Activated CD4-positive, alpha-beta T cell treated with anti-CD3 and anti-CD28 coated beads, Interleukin-2, amount 10 ng/mL, durations not matched to agents 7 days and 5 days (primary cell): ENCODE measurements at regions of chr3 and their contacts with region 1.

Region 1: DNA sequence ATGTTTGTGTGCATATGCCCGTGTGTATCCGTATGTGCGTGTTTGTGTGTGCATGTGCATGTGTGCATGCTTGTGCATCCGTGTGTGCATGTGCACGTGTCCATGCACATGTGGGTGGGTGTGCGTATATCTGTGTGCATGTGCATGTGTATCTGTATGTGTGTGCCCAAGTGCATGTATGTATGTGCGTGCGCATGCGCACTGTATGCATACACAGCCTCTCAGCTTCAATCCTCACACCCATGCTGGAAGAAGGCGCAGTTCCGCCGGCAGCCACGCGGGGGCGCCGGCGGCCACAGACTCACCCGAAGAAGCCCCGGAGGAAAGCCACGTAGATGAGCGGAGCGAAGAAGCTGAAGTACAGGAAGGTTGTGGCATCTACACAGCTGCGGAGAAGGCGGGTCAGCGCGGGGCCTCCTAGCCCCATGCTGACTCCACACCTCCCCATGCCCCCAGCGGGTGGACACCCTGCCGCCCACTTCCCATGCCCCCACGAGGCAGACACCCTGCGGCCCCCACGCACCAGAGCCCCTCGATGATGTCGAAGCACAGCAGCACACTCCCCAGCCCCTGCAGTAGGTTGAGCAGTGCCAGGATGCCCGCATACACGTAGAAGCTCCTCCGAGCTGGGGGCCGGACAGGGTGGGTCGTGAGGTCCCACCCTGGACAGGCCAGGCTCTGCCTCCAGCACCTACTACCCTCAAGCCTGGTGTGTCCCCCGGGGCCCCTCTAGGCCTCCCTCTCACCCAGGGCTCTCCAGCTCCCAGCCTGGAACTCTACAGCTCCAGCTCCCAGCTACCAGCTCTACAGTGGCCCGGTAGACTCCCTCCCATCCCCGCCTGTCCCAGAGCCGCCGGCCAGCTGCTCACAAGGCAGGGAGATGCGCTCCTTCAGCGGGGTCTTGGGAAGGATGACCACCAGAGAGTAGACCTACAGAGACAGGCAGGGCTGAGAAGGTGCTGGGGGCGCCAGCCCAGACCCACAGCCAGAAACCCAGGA is 15.4 kb downstream of the TPRA1 start:
- DNase-seq: peak; percentile 88
- H3K4me3 Mint-ChIP-seq: no peak overlapping the region
- H3K27ac Mint-ChIP-seq: no peak overlapping the region
- H3K4me1 Mint-ChIP-seq: peaks cover 7% of the 10 kb centered on the region
- H3K27me3 Mint-ChIP-seq: no peaks in the 10 kb centered on the region

Region 2: DNA sequence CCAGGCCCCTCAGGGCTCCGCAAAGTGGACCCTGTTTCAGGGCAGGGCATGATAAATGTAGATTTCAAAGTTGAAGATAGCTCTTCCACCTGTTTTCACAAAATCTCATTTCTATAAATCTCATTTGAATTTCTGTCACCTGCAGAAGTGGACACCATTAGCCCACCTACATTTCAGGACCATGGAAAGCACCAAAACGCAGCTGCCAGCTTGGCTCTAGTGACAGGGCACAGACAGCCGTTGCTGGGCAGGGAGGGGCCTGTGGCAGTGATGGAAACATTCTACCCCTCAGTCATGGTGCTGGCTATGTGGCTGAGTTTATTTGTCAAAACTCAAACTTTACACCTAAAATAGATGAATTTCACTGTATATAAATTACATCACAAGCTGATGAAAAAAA is 341.8 kb before region 1 on chr3:
- CTCF ChIA-PET with region 1: no interaction called
- POLR2A ChIA-PET with region 1: no interaction called
- DNase-seq: peak; percentile 12
- H3K4me3 Mint-ChIP-seq: no peak overlapping the region
- H3K27ac Mint-ChIP-seq: no peak overlapping the region
- H3K4me1 Mint-ChIP-seq: no peaks in the 10 kb centered on the region
- H3K27me3 Mint-ChIP-seq: peaks cover 2% of the 10 kb centered on the region

Region 3: DNA sequence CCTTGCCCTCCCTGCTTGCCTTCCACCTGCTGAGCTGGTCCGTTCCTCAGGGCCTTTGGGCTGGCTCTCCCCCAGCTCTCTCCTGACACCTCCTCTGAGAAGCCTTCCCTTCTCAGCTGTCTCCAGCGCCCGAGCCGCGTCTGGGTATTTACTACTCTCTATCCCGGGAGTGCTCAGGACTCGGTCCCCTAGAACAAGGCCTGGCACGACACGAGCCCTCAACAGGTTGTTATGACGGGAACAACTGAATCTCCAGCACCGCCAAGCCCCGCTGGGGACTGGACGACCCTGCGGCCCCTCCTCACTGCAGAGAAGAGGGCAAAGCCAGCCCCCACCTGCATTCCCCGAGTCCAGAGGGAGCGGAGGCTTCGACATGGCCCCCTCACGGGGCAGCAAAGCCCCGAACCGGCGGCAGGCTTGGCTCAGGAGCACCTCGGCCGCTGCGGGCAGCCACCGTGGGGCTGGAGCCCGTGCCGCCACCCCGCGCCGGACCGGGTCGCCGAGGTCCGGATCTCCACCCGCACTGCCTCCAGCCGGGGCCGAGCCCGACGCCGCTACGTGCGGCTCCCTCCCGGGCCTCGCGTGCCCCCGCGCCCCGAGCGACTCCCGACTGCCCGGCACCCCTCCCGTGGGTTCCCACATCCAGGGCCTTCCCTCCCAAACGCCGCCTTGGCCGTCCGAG is 14.6 kb after region 1 on chr3:
- CTCF ChIA-PET with region 1: interaction called, 34 read pairs
- POLR2A ChIA-PET with region 1: interaction called, 4 read pairs
- DNase-seq: peak; percentile 20
- H3K4me3 Mint-ChIP-seq: peak overlapping the region; percentile 91
- H3K27ac Mint-ChIP-seq: peak overlapping the region; percentile 85
- H3K4me1 Mint-ChIP-seq: peaks cover 39% of the 10 kb centered on the region
- H3K27me3 Mint-ChIP-seq: no peaks in the 10 kb centered on the region

Region 4: DNA sequence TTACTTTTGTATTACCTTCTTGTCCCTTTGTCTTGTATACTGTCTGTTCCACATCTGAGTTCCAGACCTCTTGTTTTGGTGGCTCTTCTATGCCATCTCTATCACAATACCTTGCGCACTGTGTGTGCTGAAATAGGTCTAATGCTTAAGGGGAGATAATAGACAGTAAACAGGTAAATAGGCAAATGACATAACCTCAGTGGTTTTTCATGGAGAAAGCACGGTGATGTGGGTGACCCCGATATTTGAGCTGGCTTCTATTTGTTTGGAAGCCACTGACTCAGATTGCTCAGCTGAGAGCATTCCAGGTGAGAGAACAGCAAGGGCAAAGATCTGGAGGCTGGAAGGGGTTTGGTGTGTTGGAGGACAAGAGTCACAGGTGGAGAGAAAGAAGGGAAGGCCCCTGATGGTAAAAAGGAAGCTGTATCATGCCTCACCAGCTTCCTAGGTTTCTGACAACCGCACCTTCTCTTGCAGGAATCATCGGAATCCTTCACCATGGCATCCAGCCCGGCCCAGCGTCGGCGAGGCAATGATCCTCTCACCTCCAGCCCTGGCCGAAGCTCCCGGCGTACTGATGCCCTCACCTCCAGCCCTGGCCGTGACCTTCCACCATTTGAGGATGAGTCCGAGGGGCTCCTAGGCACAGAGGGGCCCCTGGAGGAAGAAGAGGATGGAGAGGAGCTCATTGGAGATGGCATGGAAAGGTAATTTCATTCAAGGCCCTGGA is 23.8 kb after region 1 on chr3:
- CTCF ChIA-PET with region 1: interaction called, 20 read pairs
- POLR2A ChIA-PET with region 1: interaction called, 3 read pairs
- DNase-seq: no peak
- H3K4me3 Mint-ChIP-seq: peak overlapping the region; percentile 85
- H3K27ac Mint-ChIP-seq: peak overlapping the region; percentile 94
- H3K4me1 Mint-ChIP-seq: peaks cover 57% of the 10 kb centered on the region
- H3K27me3 Mint-ChIP-seq: no peaks in the 10 kb centered on the region

Region 5: GRCh38 chr3:127697551-127698240 is 122.5 kb after region 1 on chr3:
- CTCF ChIA-PET with region 1: interaction called, 10 read pairs
- POLR2A ChIA-PET with region 1: no interaction called
- DNase-seq: peak; percentile 66
- H3K4me3 Mint-ChIP-seq: no peak overlapping the region
- H3K27ac Mint-ChIP-seq: peak overlapping the region; percentile 50
- H3K4me1 Mint-ChIP-seq: peaks cover 5% of the 10 kb centered on the region
- H3K27me3 Mint-ChIP-seq: peaks cover 1% of the 10 kb centered on the region

Region 6: GRCh38 chr3:129224984-129225393 is 1649.8 kb after region 1 on chr3:
- CTCF ChIA-PET with region 1: no interaction called
- POLR2A ChIA-PET with region 1: no interaction called
- DNase-seq: peak; percentile 22
- H3K4me3 Mint-ChIP-seq: peak overlapping the region; percentile 40
- H3K27ac Mint-ChIP-seq: peak overlapping the region; percentile 86
- H3K4me1 Mint-ChIP-seq: peaks cover 49% of the 10 kb centered on the region
- H3K27me3 Mint-ChIP-seq: no peaks in the 10 kb centered on the region